ENCODE measurements at regions of chr11 and their contacts with region 1.

Region 1: DNA sequence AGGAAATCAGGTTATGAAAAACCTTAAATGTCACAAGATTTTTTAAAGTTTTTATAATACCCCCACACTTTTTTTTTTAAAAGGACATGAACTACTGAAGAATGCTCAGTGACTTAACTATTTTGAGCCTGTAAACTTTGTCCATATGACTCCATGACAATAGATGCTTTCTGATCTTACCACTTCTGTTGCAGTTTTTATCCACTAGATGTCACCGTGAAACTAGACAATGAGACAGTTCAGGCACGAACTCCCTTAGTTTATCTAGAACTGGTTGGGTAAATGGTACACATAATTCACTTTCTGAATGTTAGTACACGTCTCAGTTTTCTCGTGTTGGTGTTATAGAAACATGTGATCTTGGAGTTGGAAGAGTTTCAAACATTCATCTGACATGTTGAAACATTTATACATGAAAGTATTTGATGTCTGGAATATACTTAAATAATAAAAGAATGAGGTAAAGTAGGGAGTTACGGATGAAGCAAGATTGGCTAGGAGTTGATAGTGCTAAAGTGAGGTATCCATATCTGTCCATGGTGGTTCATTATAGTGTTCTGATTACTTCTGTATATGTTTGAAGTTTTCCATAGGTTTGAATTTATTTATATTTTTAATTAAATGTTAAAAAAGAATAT is 8.1 kb downstream of the CCDC15 start:
- DNase-seq: peak in 7 of 9 donors; percentile 44 to 74 (median 64)
- ATAC-seq: peak; percentile 96
- H3K4me3 ChIP-seq: no peak overlapping the region
- H3K4me3 Mint-ChIP-seq: no peak overlapping the region
- H3K27ac ChIP-seq: no peak overlapping the region
- H3K27ac Mint-ChIP-seq: no peak overlapping the region
- H3K4me1 ChIP-seq: no peaks in the 10 kb centered on the region
- H3K4me1 Mint-ChIP-seq: peaks cover 0 to 1% (median 0%) of the 10 kb centered on the region in 7 donors
- H3K27me3 ChIP-seq: no peaks in the 10 kb centered on the region
- H3K27me3 Mint-ChIP-seq: no peaks in the 10 kb centered on the region

Region 2: GRCh38 chr11:123511037-123511870 is 1450.8 kb before region 1 on chr11:
- CTCF ChIA-PET with region 1: no interaction called
- POLR2A ChIA-PET with region 1: no interaction called
- intact Hi-C with region 1: no loop called
- DNase-seq: peak; percentile 19 to 75 (median 50)
- ATAC-seq: peak; percentile 96
- H3K4me3 ChIP-seq: no peak overlapping the region
- H3K4me3 Mint-ChIP-seq: no peak overlapping the region
- H3K27ac ChIP-seq: no peak overlapping the region
- H3K27ac Mint-ChIP-seq: peak overlapping the region in 1 of 9 donors; percentile 58
- H3K4me1 ChIP-seq: peaks cover 0 to 3% of the 10 kb centered on the region in 2 donors
- H3K4me1 Mint-ChIP-seq: peaks cover 4 to 50% (median 6%) of the 10 kb centered on the region in 7 donors
- H3K27me3 ChIP-seq: no peaks in the 10 kb centered on the region
- H3K27me3 Mint-ChIP-seq: peaks cover 0 to 3% (median 0%) of the 10 kb centered on the region in 5 donors

Region 3: GRCh38 chr11:124612045-124612444 is 350.0 kb before region 1 on chr11:
- CTCF ChIA-PET with region 1: no interaction called
- POLR2A ChIA-PET with region 1: no interaction called
- intact Hi-C with region 1: no loop called
- DNase-seq: peak in 2 of 9 donors; percentile 15
- ATAC-seq: peak; percentile 54
- H3K4me3 ChIP-seq: no peak overlapping the region
- H3K4me3 Mint-ChIP-seq: no peak overlapping the region
- H3K27ac ChIP-seq: no peak overlapping the region
- H3K27ac Mint-ChIP-seq: peak overlapping the region in 4 of 9 donors; percentile 33 to 88 (median 53)
- H3K4me1 ChIP-seq: no peaks in the 10 kb centered on the region
- H3K4me1 Mint-ChIP-seq: peaks cover 4 to 15% (median 9%) of the 10 kb centered on the region in 7 donors
- H3K27me3 ChIP-seq: no peaks in the 10 kb centered on the region
- H3K27me3 Mint-ChIP-seq: peaks cover 1 to 16% (median 7%) of the 10 kb centered on the region in 5 donors

Region 4: GRCh38 chr11:124865921-124866583 is 96.0 kb before region 1 on chr11:
- CTCF ChIA-PET with region 1: no interaction called
- POLR2A ChIA-PET with region 1: no interaction called
- intact Hi-C with region 1: no loop called
- DNase-seq: peak in 8 of 9 donors; percentile 27 to 61 (median 46)
- ATAC-seq: peak; percentile 72
- H3K4me3 ChIP-seq: no peak overlapping the region
- H3K4me3 Mint-ChIP-seq: peak overlapping the region in 7 of 10 donors; percentile 37 to 68 (median 51)
- H3K27ac ChIP-seq: no peak overlapping the region
- H3K27ac Mint-ChIP-seq: peak overlapping the region in 1 of 9 donors; percentile 54
- H3K4me1 ChIP-seq: peaks cover 5 to 29% of the 10 kb centered on the region in 2 donors
- H3K4me1 Mint-ChIP-seq: peaks cover 7 to 67% (median 43%) of the 10 kb centered on the region in 7 donors
- H3K27me3 ChIP-seq: peaks cover 20 to 70% of the 10 kb centered on the region in 2 donors
- H3K27me3 Mint-ChIP-seq: peaks cover 80 to 97% (median 91%) of the 10 kb centered on the region in 5 donors

Region 5: GRCh38 chr11:125123947-125124617 is 162.0 kb after region 1 on chr11:
- CTCF ChIA-PET with region 1: no interaction called
- POLR2A ChIA-PET with region 1: no interaction called
- intact Hi-C with region 1: loop called (anchors 1 kb)
- DNase-seq: peak in 5 of 9 donors; percentile 16 to 29 (median 20)
- ATAC-seq: peak; percentile 78
- H3K4me3 ChIP-seq: no peak overlapping the region
- H3K4me3 Mint-ChIP-seq: no peak overlapping the region
- H3K27ac ChIP-seq: no peak overlapping the region
- H3K27ac Mint-ChIP-seq: no peak overlapping the region
- H3K4me1 ChIP-seq: no peaks in the 10 kb centered on the region
- H3K4me1 Mint-ChIP-seq: peaks cover 0 to 8% (median 0%) of the 10 kb centered on the region in 7 donors
- H3K27me3 ChIP-seq: peaks cover 0 to 7% of the 10 kb centered on the region in 2 donors
- H3K27me3 Mint-ChIP-seq: peaks cover 26 to 45% (median 43%) of the 10 kb centered on the region in 5 donors

Region 6: DNA sequence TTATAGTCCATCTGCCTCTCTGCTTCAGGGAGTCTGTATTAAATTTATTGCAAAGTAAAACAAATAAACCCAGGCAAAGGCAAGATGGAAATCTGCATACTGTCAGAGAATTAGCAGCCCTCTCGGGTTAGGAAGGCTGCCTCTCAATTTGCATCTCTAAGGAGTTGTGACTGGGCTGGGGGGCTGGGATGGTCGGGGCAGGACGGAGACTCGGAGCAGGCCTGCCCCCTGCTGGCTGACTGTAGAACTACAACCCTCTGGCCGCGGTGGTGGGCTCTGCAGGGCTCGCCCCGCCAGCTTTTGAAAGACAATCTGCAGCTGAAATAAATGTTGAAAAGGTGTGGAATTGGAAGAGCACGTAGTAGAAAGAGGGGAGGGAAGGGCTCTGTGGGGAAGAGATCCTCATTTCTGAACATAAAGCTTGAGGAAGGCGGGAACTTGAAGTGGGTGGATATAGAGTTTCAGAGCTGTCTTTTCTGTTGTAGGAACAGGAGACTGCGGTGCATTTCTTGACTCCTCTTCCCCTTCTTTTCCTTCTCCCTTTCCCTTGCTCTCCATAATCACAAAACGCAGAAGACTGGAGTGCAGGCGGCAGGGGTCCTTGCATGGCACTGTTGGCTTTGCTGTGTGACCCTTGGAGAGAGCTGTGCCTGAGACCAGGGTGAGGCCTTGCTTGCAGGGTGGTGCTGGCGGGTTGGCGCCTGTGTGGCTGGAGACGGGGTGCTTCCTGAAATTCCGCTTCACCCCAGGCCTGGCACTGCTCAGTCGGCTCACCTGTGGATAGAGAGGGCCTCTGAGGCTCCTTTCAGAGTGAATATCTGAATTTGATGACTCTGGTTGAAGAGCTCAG is 179.8 kb after region 1 on chr11:
- CTCF ChIA-PET with region 1: interaction called, 22 read pairs
- POLR2A ChIA-PET with region 1: no interaction called
- intact Hi-C with region 1: loop called (anchors 1 kb)
- DNase-seq: peak; percentile 21 to 73 (median 48)
- ATAC-seq: peak; percentile 95
- H3K4me3 ChIP-seq: no peak overlapping the region
- H3K4me3 Mint-ChIP-seq: peak overlapping the region in 3 of 10 donors; percentile 10 to 49 (median 20)
- H3K27ac ChIP-seq: no peak overlapping the region
- H3K27ac Mint-ChIP-seq: no peak overlapping the region
- H3K4me1 ChIP-seq: no peaks in the 10 kb centered on the region
- H3K4me1 Mint-ChIP-seq: peaks cover 0 to 6% (median 5%) of the 10 kb centered on the region in 7 donors
- H3K27me3 ChIP-seq: peaks cover 0 to 5% of the 10 kb centered on the region in 2 donors
- H3K27me3 Mint-ChIP-seq: peaks cover 15 to 47% (median 27%) of the 10 kb centered on the region in 5 donors

Region 7: DNA sequence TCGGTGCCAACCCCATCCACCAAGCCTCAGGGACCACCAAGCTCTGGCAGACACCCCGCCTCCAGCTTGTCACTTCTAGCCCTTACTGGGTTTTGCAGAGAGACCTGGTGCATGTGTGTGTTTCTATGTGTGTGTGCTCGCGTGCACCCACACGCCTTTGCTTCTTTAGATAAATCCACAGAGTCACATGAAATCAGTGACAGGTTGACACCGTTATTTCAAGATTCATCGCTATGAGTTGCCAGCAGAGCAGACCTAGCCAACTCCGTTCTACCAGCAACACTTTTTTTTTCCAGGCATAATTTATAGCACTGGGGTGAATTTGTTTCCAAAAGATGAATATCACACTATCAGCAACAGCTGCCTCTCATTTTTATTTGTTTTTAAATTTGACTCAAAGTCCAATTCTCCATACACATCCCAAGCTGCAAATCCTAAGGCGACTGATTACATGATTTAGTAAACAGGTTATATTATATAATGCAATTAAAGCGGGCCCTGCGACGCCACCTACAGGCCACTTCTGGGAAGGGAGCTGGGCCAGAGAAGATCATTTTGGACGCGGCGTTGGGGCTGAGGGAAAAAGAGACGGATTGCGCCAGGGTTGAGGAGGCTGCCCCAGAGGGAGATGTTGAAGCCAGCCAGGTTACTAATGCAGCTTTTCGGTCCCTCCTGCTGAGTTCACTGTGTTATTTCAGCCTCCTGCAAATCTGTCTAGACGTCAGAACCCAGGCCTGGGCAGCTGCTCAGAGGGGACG is 383.5 kb after region 1 on chr11:
- CTCF ChIA-PET with region 1: no interaction called
- POLR2A ChIA-PET with region 1: no interaction called
- intact Hi-C with region 1: loop called (anchors 1 kb)
- DNase-seq: peak in 6 of 9 donors; percentile 17 to 29 (median 22)
- ATAC-seq: peak; percentile 45
- H3K4me3 ChIP-seq: no peak overlapping the region
- H3K4me3 Mint-ChIP-seq: no peak overlapping the region
- H3K27ac ChIP-seq: no peak overlapping the region
- H3K27ac Mint-ChIP-seq: no peak overlapping the region
- H3K4me1 ChIP-seq: no peaks in the 10 kb centered on the region
- H3K4me1 Mint-ChIP-seq: peaks cover 0 to 3% (median 0%) of the 10 kb centered on the region in 7 donors
- H3K27me3 ChIP-seq: no peaks in the 10 kb centered on the region
- H3K27me3 Mint-ChIP-seq: peaks cover 5 to 24% (median 10%) of the 10 kb centered on the region in 5 donors

Region 8: DNA sequence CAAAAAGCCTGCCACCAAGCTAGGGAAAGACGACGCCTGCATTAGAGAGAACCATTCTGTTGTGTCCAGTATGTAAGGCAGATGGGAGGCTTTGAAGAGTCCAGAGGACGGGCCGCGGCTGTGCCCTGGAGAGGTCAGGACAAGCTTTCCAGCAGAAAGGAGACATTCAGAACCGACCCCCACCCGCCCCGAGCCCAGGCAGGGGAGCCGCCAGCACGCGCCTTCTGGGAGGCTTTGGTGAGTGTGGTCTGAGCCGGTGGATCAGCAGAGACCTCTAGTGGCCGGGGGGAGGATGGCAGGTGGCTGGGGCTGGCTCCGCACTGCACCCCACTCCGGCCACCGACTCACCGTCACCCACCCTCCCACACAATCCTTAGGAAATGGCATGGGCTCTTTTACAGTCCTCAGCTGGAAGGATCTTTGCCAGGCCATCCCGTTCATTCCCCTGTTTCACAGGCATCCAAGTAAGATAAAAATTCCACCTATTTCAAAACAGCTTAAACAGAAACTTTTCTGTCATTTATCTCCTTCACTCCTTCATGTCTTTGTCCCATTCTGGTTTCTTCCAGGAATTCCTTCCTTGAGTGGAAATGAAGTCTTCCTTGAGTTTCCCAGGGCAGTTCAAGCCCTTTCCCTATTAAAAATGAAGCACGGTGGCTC is 442.8 kb after region 1 on chr11:
- CTCF ChIA-PET with region 1: interaction called, 3 read pairs
- POLR2A ChIA-PET with region 1: no interaction called
- intact Hi-C with region 1: loop called (anchors 1 to 10 kb)
- DNase-seq: peak; percentile 15 to 75 (median 51)
- ATAC-seq: peak; percentile 91
- H3K4me3 ChIP-seq: no peak overlapping the region
- H3K4me3 Mint-ChIP-seq: peak overlapping the region in 6 of 10 donors; percentile 7 to 26 (median 20)
- H3K27ac ChIP-seq: no peak overlapping the region
- H3K27ac Mint-ChIP-seq: no peak overlapping the region
- H3K4me1 ChIP-seq: no peaks in the 10 kb centered on the region
- H3K4me1 Mint-ChIP-seq: peaks cover 0 to 10% (median 6%) of the 10 kb centered on the region in 7 donors
- H3K27me3 ChIP-seq: peaks cover 0 to 4% of the 10 kb centered on the region in 2 donors
- H3K27me3 Mint-ChIP-seq: peaks cover 41 to 67% (median 57%) of the 10 kb centered on the region in 5 donors

Region 9: DNA sequence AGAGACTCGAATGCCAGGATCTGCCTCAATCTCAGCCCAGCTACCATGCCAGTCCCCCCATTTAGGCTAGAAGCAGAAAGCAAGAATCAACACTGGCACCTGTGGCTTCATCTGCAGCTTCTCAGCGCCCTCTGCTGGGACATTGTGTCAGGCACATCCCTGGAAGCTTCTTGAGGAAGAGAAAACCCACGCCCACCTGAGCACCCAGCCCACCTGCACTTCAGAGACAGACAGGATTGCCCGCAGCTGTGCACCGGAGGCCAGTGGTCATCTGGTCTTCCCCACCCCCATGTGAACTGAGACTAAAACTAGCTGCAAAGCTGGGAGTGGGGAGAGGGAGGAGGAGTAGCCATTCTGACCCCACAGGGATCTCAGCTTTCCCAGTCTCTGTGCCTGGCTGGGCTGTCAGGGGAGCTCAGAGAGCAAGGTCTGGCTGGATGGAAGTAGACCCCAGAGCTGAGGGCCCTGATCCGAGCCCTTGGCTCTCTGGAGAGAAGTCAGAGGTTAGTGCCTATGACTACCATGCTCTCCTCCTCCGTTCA is 467.1 kb after region 1 on chr11:
- CTCF ChIA-PET with region 1: no interaction called
- POLR2A ChIA-PET with region 1: no interaction called
- intact Hi-C with region 1: loop called in 1 of 2 experiments (anchors 1 kb)
- DNase-seq: peak in 6 of 9 donors; percentile 12 to 32 (median 14)
- ATAC-seq: peak; percentile 38
- H3K4me3 ChIP-seq: no peak overlapping the region
- H3K4me3 Mint-ChIP-seq: no peak overlapping the region
- H3K27ac ChIP-seq: no peak overlapping the region
- H3K27ac Mint-ChIP-seq: peak overlapping the region in 1 of 9 donors; percentile 51
- H3K4me1 ChIP-seq: no peaks in the 10 kb centered on the region
- H3K4me1 Mint-ChIP-seq: peaks cover 0 to 6% (median 0%) of the 10 kb centered on the region in 7 donors
- H3K27me3 ChIP-seq: no peaks in the 10 kb centered on the region
- H3K27me3 Mint-ChIP-seq: peaks cover 7 to 43% (median 15%) of the 10 kb centered on the region in 5 donors

Measured in naive thymus-derived CD4-positive, alpha-beta T cell (primary cell).